Posterior cingulate gyrus (tissue), 11 donors: ENCODE measurements at regions of chr1 and their contacts with region 1.

Region 1: GRCh38 chr1:83931658-83932253 is 67.2 kb downstream of the TTLL7 start:
- DNase-seq: no peak

Region 2: GRCh38 chr1:83673312-83673711 is 258.4 kb before region 1 on chr1:
- intact Hi-C with region 1: no loop called
- DNase-seq: no peak

Region 3: DNA sequence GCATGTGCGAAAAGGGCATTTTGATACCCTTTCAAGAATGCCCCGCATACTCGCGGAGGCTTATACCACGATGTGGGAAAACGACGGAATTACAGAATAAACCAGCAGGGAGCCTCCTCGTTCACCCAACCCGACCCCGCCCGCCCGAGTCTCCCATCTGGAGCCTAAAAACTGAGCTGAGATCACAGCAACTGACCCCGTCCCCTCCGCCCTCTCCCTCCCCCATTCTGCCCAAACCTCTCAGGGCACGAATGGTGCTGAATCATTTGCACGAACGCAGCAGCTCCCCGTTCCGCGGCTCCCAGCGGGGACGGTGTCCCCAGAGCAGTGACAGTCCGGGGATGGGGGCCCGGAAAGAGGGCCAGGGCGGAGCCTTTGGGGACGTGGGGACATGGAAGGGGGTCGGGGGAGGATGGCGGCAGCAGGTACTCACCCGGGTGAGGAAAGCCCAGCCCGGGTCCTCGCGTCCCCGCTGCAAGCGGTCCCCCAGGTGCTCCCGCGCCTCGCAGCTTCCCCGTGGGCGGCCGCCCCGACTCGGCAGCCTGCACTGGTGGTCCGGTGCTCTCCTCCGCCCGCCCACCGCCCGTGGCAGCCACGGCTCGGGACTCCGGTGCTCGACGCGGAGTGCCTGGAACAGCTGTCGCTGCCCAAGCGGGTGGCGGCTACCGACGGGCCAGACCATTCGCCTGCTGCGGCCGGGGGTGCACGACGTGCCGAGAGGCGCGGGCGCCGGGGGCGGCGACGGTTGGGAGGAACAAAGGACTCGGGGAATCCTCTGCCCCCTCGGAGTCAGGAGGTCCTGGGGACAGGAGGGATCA is 67.0 kb after region 1 on chr1 and contains the start of gene TTLL7:
- intact Hi-C with region 1: loop called (anchors 10 kb)
- DNase-seq: peak; percentile 85 to 99 (median 92)

Region 4: DNA sequence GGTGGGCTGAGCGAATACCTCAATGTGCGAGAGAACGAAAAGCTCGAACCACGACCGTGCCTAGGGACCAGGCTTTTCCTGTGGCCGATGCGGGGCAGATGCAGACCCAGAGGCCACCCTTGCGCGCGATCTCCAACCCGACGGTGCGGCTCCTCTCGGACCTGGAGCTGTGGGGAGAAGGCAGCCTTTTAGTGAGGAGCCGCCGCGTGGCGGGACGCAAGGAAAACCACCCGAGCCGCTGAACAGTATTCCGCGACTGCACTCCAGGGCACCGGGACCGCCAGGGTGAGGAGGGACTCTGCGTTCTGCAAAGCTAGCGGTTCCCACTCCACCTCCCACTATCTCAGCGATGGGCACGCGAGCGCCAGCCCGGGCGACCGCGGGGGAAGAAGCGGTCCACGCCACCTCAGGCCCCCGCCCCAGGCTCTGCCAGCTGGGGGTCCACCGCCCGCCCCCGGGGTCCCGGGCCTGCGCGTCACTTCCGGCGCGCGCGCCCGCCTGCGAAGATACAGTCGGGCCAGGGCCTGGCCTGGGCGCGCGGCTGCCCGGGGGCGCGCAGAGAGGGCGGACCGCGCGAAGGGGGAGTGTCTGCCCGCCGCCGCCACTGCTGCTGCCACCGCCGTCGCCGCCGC is 145.8 kb after region 1 on chr1:
- intact Hi-C with region 1: loop called (anchors 2 kb)
- DNase-seq: peak; percentile 63 to 98 (median 76)

Region 5: DNA sequence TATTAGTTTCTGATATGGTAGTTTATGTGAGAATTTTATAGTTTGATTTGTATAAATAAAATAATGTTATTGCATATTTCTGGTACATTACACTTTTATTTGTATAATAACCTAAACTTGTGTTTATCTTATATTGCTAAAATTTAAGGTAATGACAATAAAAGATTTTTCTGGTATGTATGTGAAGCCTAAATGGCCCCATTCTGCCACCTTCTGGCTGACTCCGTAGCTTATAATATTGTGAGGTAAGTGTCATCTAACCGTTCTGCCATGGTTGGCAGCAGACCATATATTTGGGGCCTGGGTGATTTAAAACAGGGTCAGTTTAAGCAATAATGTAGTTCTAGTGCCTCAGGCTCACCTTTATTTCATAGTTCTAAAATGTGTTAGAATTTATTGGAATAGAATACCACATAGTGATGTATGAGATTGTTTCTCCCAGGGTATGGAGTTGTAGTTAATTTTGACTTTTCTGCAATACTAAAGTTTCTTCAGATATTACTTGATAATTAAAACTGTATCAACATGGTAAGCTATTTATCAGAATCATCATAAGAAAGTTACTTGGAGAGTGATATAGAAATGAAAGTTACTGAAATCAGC is 191.1 kb after region 1 on chr1:
- intact Hi-C with region 1: loop called (anchors 1 kb)
- DNase-seq: peak in 8 of 10 donors; percentile 35 to 86 (median 60)

Region 6: DNA sequence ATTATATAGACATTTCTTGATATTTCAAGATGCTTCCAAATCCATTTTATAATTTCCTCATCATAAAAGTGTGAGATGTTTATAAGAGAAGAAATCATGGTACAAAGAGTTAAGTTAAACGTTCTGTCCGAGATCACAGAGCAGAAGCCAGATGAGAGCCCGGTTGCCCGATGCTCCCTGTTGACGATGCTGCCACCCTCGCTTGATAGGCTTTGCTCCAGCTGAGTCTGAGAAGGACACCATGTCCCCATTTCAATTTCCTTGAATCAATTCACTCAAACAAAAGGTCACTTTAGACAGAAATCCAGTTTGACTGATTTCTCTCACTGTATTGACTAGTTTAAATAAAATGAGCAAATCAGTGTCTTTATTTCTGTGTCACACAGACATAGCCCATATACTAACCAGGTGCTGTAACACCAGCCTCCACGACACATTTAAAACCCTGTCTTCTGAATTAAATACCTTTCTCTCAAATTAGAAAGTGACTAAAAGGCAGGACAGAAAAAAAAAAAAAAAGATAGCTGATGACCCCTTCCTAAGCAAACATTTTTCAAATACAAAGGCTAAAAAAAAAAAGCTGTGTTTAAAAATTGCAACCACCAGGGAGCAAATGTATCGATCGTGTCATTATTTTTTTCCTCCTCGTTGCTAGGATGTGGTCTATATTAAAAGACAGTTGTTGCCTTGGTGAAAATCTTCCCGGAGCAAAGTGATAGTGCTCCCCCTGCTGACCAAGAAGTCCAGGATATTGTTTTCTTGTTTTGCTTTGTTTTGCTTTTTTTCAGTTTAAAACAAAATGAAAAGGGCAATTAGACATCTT is 501.7 kb after region 1 on chr1:
- intact Hi-C with region 1: loop called (anchors 10 kb)
- DNase-seq: peak in 8 of 10 donors; percentile 33 to 87 (median 61)

Region 7: GRCh38 chr1:84753516-84754385 is 822.0 kb after region 1 on chr1:
- intact Hi-C with region 1: loop called (anchors 10 kb)
- DNase-seq: peak; percentile 66 to 97 (median 84)